Activated CD4-positive, alpha-beta T cell treated with anti-CD3 and anti-CD28 coated beads, Interleukin-2, amount 10 ng/mL, durations not matched to agents 7 days and 5 days (primary cell): ENCODE measurements at regions of chr22 and their contacts with region 1.

Region 1: DNA sequence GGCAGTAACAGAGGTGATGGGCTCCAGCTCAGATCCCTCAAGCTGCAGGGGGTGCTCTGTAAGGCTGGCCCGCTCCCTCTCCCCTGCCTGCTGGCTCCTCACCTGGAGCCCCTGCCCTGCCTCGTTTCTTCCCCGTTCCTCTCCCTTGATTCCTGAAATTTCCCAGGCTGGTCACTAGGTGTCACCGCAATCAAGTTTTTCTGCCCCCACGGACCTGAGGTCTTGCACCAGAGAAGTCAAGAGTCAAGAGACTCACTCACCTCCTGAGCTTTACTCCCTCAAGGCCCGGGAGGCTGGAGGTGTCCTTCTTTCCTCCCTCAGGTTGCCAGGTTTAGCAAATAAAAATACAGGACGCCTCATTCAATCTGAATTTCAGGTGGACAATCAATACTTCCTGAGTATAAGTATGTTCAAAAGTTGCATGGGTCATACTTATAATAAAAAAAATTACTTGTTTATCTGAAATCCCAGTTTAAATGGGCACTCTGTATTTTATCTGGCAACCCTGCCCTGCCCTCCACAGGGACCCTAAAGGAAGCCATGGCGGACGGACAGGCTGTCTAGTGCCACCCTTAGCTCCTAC is 69.2 kb downstream of the SCUBE1 start:
- DNase-seq: peak; percentile 49
- H3K4me3 Mint-ChIP-seq: no peak overlapping the region
- H3K27ac Mint-ChIP-seq: no peak overlapping the region
- H3K4me1 Mint-ChIP-seq: peaks cover 9% of the 10 kb centered on the region
- H3K27me3 Mint-ChIP-seq: no peaks in the 10 kb centered on the region

Region 2: DNA sequence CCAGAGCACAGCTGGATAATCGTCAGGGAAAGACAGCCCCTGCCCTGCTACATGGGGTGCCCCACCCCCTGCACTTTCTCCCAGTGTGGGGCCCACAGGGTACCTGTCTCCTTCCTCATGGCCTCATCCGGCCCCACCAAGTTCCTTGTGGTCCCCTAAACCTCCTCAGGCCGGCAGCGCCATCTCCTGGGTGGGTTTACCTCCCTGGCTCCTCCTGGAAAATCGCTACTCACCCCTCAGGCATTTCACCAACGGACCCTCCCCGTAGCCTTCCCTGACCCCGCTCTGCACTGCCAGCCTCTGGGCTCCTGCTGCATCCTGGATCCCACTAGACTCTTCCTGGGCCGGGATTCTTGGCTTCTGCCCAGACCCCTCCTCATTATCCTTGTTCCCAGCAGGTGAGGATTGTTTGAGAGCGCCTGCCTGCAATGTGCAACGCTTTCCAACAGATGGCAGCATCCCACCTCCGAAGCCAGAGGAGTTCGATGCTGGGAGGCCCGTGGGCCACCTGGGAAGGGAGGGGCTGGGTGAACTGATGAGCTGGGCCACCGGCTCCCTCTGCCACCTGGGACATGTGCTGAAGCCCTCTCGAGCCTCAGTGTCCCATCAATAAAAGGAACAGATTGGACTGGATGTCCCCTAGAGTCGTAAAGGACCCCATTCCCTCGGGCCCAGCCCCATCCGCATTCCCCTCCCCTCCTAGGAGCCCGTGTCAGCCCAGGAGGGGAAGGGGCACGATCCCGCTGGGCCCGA is 42.8 kb before region 1 on chr22:
- CTCF ChIA-PET with region 1: interaction called, 11 read pairs
- POLR2A ChIA-PET with region 1: no interaction called
- DNase-seq: peak; percentile 73
- H3K4me3 Mint-ChIP-seq: no peak overlapping the region
- H3K27ac Mint-ChIP-seq: no peak overlapping the region
- H3K4me1 Mint-ChIP-seq: peaks cover 5% of the 10 kb centered on the region
- H3K27me3 Mint-ChIP-seq: no peaks in the 10 kb centered on the region

Region 3: DNA sequence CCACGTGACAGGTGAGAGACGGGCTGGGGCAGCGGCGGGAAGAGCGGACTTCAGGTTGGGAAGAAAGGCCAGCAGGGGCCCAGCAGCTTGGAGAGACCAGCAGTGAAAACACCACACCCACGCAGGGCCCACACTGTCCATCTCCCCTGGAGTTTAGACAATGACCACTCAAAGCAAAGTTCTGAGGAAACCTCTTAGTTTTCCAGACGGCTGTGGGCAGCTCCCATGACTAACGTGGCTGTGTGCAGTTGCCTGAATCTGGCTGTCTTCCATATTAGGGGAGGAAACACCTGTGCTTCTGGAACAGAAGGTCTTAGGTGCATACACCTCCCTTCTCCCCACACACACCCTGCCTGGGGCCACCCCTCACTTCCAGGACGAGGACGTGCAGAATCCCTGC is 16.4 kb before region 1 on chr22:
- CTCF ChIA-PET with region 1: no interaction called
- POLR2A ChIA-PET with region 1: no interaction called
- DNase-seq: no peak
- H3K4me3 Mint-ChIP-seq: no peak overlapping the region
- H3K27ac Mint-ChIP-seq: no peak overlapping the region
- H3K4me1 Mint-ChIP-seq: peaks cover 16% of the 10 kb centered on the region
- H3K27me3 Mint-ChIP-seq: peaks cover 22% of the 10 kb centered on the region